ENCODE measurements at regions of chr3 and their contacts with region 1.

Region 1: DNA sequence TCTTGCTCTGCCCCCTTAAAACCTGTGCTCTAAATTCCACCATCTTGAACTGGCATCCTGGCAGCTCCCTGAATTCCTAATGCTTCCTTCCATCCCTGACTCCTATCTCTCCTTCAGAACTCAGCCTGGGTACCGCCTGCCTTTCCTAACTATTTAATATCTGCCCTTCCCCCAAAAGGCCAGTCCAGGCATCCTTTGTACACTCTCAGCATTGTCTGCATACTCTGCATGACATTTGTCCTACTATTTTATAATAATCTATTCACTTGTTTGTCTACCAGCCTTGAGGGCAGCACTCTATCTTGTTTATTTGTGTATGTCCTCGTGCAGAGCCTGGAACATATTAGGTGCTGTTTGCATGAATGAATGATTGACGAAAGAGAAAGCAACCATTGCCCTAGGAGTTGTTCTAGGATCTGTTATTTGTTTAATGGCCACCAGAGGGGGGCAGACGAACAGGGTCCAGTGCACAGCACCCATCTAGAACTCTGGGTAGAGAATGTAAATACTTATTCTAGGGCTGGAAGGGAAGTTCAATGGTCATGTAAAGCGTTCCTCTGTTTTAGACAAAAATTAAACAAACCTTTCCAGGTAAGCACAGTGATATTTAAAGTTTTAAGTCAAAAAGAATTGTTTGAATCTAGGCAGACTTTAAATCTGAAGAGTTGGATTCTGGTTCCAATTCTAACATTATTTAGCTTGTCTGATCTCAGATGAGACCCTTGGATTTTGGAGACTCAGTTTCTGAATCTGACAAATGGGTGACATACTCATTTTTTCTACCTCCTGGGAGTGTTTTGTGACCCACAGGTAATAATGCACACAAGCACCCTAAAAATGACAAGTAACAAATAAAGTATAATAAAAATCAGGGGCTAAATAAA is 125.8 kb upstream of the GALNT15 start:
- DNase-seq: peak; percentile 55
- H3K4me3 ChIP-seq: peak overlapping the region in 2 of 3 experiments; percentile 6 to 16
- H3K27ac ChIP-seq: no peak overlapping the region
- H3K4me1 ChIP-seq: no peaks in the 10 kb centered on the region
- H3K27me3 ChIP-seq: no peaks in the 10 kb centered on the region
- CTCF ChIP-seq: peak; percentile 58 to 81

Region 2: GRCh38 chr3:15120986-15121385 is 927.7 kb before region 1 on chr3:
- CTCF ChIA-PET with region 1: no interaction called
- dilution Hi-C with region 1: no loop called
- in situ Hi-C with region 1: no loop called
- intact Hi-C with region 1: no loop called
- DNase-seq: no peak
- H3K4me3 ChIP-seq: no peak overlapping the region
- H3K27ac ChIP-seq: no peak overlapping the region
- H3K4me1 ChIP-seq: no peaks in the 10 kb centered on the region
- H3K27me3 ChIP-seq: no peaks in the 10 kb centered on the region
- CTCF ChIP-seq: no peak

Region 3: DNA sequence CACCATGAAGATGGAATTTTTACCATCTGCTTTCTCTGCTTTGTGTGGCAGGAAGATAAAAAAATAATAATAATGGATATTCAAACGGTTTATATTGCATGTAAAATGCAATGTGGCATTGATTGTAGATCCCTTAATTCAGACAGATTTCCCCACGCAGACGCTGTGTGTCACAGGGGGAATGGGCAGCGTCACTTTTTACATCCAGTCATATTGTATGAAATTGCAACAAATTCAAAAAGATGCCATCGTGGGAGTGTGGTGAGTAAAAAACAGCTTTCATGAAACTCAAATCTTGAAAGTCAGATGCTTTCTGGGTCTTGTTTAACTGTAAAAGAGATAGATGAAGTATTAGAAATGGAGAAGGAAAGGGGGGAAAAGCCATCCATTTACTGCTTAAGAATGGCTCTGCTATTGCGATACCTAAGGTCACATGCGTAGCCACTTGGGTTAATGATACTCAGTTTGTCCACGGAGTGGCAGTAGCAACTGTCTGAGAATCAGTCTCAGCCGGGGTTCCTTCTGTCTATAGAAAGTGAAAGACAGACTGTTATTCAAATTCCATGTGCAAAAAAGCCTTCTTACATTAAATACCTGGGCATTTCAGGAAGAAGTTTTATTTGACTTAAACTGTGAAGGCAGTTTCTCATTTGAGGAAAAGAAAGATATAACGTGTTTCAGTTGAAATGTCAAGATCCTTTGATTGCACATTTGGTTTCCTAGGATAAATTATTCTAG is 418.6 kb before region 1 on chr3:
- CTCF ChIA-PET with region 1: no interaction called
- dilution Hi-C with region 1: no loop called
- in situ Hi-C with region 1: loop called in 1 of 2 experiments (anchors 25 kb)
- intact Hi-C with region 1: loop called (anchors 2 kb)
- DNase-seq: peak; percentile 72
- H3K4me3 ChIP-seq: peak overlapping the region in 2 of 3 experiments; percentile 44 to 52
- H3K27ac ChIP-seq: peak overlapping the region; percentile 76
- H3K4me1 ChIP-seq: peaks cover 46% of the 10 kb centered on the region
- H3K27me3 ChIP-seq: no peaks in the 10 kb centered on the region
- CTCF ChIP-seq: peak; percentile 71 to 78

Region 4: GRCh38 chr3:15982667-15983145 is 66.0 kb before region 1 on chr3:
- CTCF ChIA-PET with region 1: interaction called, 3 read pairs
- dilution Hi-C with region 1: no loop called
- in situ Hi-C with region 1: no loop called
- intact Hi-C with region 1: loop called (anchors 2 kb)
- DNase-seq: peak; percentile 99
- H3K4me3 ChIP-seq: peak overlapping the region in 2 of 3 experiments; percentile 12
- H3K27ac ChIP-seq: peak overlapping the region; percentile 86
- H3K4me1 ChIP-seq: peaks cover 24% of the 10 kb centered on the region
- H3K27me3 ChIP-seq: no peaks in the 10 kb centered on the region
- CTCF ChIP-seq: no peak

Region 5: DNA sequence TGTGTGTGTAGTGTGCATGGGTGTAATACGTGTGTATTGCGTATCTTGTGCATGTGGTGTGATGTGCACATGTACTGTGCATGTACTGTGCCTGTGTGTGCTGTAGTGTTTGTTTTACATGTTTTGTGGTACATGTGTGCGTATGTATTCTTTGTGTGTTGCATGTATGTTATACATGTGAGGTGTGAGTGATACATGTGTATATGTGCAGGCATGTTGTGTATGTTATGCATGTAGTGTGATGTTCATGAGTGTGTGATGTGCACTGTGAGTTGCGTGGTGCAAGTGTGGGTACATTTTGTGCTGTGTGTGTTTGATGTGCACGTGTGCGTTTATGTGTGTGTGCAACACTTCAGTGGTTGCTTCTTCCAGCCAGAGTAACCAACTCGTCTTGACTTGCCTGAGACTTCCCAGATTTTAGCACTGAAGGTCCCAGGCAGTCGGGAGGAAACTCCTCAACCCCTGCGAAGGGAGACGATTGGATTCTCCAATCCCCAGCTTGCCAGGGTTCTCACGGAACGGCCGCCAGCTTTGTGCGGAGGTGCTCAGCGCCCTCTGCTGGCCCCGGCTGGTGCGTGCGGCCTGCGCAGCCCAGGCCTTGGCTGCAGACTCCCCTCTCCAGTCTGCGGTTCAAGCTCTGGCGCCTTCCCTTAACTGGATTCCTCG is 129.4 kb after region 1 on chr3:
- CTCF ChIA-PET with region 1: interaction called, 6 read pairs
- dilution Hi-C with region 1: no loop called
- in situ Hi-C with region 1: loop called (anchors 5 to 10 kb)
- intact Hi-C with region 1: loop called (anchors 1 kb)
- DNase-seq: peak; percentile 62
- H3K4me3 ChIP-seq: no peak overlapping the region
- H3K27ac ChIP-seq: no peak overlapping the region
- H3K4me1 ChIP-seq: peaks cover 5% of the 10 kb centered on the region
- H3K27me3 ChIP-seq: peaks cover 4% of the 10 kb centered on the region
- CTCF ChIP-seq: peak; percentile 93 to 99

Region 6: GRCh38 chr3:16200411-16200810 is 151.7 kb after region 1 on chr3:
- CTCF ChIA-PET with region 1: no interaction called
- dilution Hi-C with region 1: no loop called
- in situ Hi-C with region 1: no loop called
- intact Hi-C with region 1: no loop called
- DNase-seq: peak; percentile 85
- H3K4me3 ChIP-seq: no peak overlapping the region
- H3K27ac ChIP-seq: no peak overlapping the region
- H3K4me1 ChIP-seq: peaks cover 16% of the 10 kb centered on the region
- H3K27me3 ChIP-seq: peaks cover 10% of the 10 kb centered on the region
- CTCF ChIP-seq: no peak

Region 7: GRCh38 chr3:16550676-16551341 is 502.1 kb after region 1 on chr3:
- CTCF ChIA-PET with region 1: no interaction called
- dilution Hi-C with region 1: no loop called
- in situ Hi-C with region 1: no loop called
- intact Hi-C with region 1: loop called (anchors 2 kb)
- DNase-seq: peak; percentile 88
- H3K4me3 ChIP-seq: peak overlapping the region; percentile 1 to 30 (median 3)
- H3K27ac ChIP-seq: peak overlapping the region; percentile 1
- H3K4me1 ChIP-seq: peaks cover 26% of the 10 kb centered on the region
- H3K27me3 ChIP-seq: no peaks in the 10 kb centered on the region
- CTCF ChIP-seq: peak; percentile 78 to 85